ENCODE measurements at regions of chr14 and their contacts with region 1.

Region 1: GRCh38 chr14:102805371-102806246 is 28.4 kb downstream of the TRAF3 start:
- DNase-seq: peak in 1 of 3 donors; percentile 40
- H3K4me3 ChIP-seq: no peak overlapping the region
- H3K4me3 Mint-ChIP-seq: no peak overlapping the region
- H3K27ac ChIP-seq: no peak overlapping the region
- H3K27ac Mint-ChIP-seq: peak overlapping the region in 4 of 7 donors; percentile 4 to 70 (median 32)
- H3K4me1 ChIP-seq: peaks cover 0 to 7% of the 10 kb centered on the region in 2 donors
- H3K4me1 Mint-ChIP-seq: peaks cover 26% of the 10 kb centered on the region
- H3K27me3 ChIP-seq: no peaks in the 10 kb centered on the region
- H3K27me3 Mint-ChIP-seq: no peaks in the 10 kb centered on the region
- CTCF ChIP-seq: no peak

Region 2: DNA sequence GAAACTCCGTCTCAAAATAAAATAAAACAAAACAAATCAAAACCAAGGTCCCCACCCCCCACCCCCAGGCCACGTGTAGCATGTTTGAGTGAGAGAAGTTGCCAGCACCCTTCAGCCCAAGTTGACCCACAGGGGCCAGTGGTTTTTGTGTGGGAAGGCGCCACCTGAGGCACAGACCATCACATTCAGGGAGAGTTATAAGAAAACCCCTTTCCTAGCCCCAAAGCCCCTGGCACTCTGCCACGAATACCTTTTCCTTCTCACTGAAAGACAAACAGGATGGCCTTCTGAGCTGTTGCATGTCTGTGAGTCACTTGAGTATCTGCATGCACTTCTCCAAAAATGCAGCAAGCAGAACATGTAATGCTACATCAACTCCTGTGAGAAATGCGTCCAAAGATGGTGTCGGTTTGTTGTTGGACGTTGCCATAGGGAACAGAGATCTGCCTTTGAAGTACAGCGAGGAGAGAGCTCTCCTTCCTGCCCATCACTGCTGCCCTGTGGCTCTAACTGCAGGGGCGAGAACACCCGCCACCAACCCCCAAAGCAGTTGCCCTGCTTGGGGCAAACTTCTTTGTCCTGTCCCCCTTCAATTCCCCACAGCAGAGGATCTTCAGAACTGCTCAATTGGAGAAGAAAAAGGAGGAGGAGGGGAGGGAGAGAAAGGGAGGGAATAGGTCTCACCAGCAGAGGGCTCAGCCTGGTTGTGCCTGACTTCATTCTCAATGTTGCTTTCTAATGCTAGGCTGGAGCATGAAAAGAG is 31.0 kb before region 1 on chr14:
- intact Hi-C with region 1: loop called in 1 of 2 experiments (anchors 5 kb)
- DNase-seq: peak; percentile 86 to 92 (median 87)
- H3K4me3 ChIP-seq: no peak overlapping the region
- H3K4me3 Mint-ChIP-seq: peak overlapping the region; percentile 30 to 57
- H3K27ac ChIP-seq: peak overlapping the region; percentile 53 to 76
- H3K27ac Mint-ChIP-seq: peak overlapping the region; percentile 89 to 96 (median 92)
- H3K4me1 ChIP-seq: peaks cover 35 to 39% of the 10 kb centered on the region in 2 donors
- H3K4me1 Mint-ChIP-seq: peaks cover 43% of the 10 kb centered on the region
- H3K27me3 ChIP-seq: no peaks in the 10 kb centered on the region
- H3K27me3 Mint-ChIP-seq: peaks cover 3 to 12% (median 3%) of the 10 kb centered on the region in 3 donors
- CTCF ChIP-seq: peak; percentile 73